ENCODE measurements at regions of chr11 and their contacts with region 1.

Region 1: DNA sequence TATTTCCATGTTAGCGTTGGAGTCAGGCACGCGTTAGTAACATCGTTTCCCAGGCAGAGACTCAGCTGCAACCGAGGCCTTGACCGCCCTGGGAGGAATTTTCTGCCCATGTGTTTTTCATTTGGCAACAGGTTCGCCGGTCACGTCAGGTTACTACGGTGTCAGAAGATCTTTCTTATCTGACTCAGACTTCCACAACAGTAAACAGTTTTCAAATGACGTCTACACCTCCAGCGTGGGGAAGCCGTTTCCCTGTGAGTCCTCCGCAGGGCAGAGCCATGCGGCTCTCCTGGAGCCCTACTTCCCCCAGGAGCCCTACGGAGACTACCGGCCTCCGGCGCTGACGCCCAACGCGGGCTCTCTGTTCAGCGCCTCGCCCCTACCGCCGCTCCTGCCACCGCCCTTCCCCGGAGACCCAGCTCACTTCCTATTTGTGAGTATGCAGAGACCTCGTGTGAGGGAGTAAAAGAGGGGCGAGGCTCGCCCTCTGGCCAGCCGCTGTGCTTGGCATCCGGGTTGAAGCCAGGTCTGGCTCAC is 14.3 kb upstream of the POU2AF3 start:
- DNase-seq: peak; percentile 37
- ATAC-seq: peak; percentile 63
- H3K4me3 ChIP-seq: peak overlapping the region in 1 of 5 experiments; percentile 9
- H3K4me3 Mint-ChIP-seq: peak overlapping the region; percentile 49
- H3K27ac ChIP-seq: no peak overlapping the region
- H3K27ac Mint-ChIP-seq: no peak overlapping the region
- H3K4me1 ChIP-seq: peaks cover 12 to 16% of the 10 kb centered on the region in 2 donors
- H3K4me1 Mint-ChIP-seq: peaks cover 12% of the 10 kb centered on the region
- H3K27me3 ChIP-seq: no peaks in the 10 kb centered on the region
- H3K27me3 Mint-ChIP-seq: no peaks in the 10 kb centered on the region
- CTCF ChIP-seq: no peak

Region 2: DNA sequence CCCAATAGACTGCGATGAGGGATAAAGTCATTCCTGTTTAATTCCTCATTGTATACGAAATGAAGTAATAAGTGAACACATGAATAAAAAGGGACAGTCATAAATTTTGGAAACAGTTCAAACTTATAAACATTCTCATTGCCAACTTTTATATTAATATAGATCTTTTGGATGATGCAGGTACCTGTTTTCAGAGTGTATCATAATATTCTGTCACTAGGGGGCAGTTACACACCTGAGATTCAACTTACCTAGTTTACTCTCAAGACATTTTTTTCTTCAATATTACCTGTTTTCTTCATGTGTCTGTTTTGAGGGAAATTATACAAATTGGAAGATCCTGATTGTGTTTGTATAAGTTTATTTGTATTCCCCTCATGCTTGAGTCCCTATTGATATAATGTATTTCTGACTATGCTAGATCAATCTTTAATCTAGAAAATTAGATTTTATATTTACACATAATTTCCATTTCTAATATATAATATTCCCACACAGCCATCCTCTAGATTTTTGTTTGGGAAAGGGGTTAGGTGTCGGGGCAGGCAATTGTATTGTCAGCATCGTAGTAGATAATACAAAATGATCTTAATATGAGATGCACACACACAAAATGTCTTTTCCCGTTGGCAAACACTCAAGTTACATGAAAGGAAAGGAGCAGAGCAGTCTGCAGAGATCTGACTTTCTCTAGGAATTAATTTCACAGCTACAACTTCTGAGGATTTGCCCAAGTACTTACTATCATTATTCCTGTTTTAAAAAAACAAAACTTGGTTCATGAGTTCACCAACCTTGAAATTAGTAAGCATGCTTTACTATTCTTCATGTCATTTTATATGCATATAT is 835.9 kb before region 1 on chr11:
- CTCF ChIA-PET with region 1: interaction called, 22 read pairs
- POLR2A ChIA-PET with region 1: no interaction called
- intact Hi-C with region 1: loop called (anchors 5 kb)
- DNase-seq: peak; percentile 45
- ATAC-seq: no peak
- H3K4me3 ChIP-seq: no peak overlapping the region
- H3K4me3 Mint-ChIP-seq: no peak overlapping the region
- H3K27ac ChIP-seq: no peak overlapping the region
- H3K27ac Mint-ChIP-seq: no peak overlapping the region
- H3K4me1 ChIP-seq: no peaks in the 10 kb centered on the region
- H3K4me1 Mint-ChIP-seq: peaks cover 13% of the 10 kb centered on the region
- H3K27me3 ChIP-seq: no peaks in the 10 kb centered on the region
- H3K27me3 Mint-ChIP-seq: no peaks in the 10 kb centered on the region
- CTCF ChIP-seq: peak; percentile 77

Region 3: DNA sequence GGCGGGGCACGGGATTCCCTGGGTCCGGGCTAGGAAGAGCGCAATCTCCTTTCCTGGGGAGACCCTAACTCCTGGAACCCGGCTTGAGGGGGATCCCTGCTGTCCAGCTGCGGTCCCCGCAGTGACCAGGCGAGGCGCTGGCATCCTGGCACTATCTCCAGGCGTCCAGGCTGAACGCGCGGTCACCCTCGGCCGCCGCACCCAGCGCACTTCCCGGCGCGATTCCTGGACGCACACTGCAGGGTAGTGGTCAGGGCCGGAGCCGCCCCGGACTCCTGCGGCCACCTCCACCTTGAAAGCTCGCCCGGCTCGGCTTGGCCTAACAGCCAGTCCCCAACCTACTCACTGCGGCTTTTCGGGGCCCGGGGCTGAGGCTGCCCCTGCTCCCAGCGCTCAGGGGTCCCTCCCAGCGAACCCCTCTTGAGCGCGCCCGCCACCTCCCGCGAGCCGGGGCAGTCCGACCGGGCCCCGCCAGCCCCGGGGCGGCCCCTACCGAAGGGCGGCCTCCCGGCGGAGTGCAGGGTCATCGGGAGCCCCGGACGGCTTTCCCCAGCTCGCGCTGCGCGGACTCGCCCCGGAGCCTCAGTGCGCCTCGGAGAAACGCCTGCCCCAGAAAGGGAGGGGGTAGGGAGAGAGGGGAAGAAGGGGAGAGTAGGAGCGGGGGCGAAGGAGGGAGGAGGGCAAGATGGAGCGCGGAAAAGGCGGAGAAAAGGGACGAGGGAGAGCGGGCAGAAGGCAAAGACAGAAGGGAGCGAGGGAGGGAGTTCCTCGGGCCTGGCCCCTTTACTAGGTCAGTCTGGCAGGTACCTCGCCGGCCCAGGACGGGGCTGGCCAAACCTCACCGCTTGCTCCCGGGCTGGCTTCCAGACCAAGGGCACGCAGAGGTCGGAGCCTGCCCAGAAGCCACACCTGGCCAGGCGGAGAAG is 15.4 kb after region 1 on chr11:
- CTCF ChIA-PET with region 1: interaction called, 42 read pairs
- POLR2A ChIA-PET with region 1: no interaction called
- intact Hi-C with region 1: loop called (anchors 2 kb)
- DNase-seq: peak; percentile 46
- ATAC-seq: peak; percentile 59
- H3K4me3 ChIP-seq: peak overlapping the region in 4 of 5 experiments; percentile 57 to 77 (median 66)
- H3K4me3 Mint-ChIP-seq: peak overlapping the region; percentile 76
- H3K27ac ChIP-seq: peak overlapping the region in 1 of 2 donors; percentile 23
- H3K27ac Mint-ChIP-seq: peak overlapping the region; percentile 61
- H3K4me1 ChIP-seq: peaks cover 32 to 45% of the 10 kb centered on the region in 2 donors
- H3K4me1 Mint-ChIP-seq: peaks cover 35% of the 10 kb centered on the region
- H3K27me3 ChIP-seq: peaks cover 0 to 29% (median 9%) of the 10 kb centered on the region in 4 experiments
- H3K27me3 Mint-ChIP-seq: peaks cover 12% of the 10 kb centered on the region
- CTCF ChIP-seq: peak; percentile 37

Region 4: GRCh38 chr11:111399187-111400031 is 115.4 kb after region 1 on chr11:
- CTCF ChIA-PET with region 1: interaction called, 11 read pairs
- POLR2A ChIA-PET with region 1: interaction called, 3 read pairs
- intact Hi-C with region 1: no loop called
- DNase-seq: peak; percentile 52
- ATAC-seq: peak; percentile 55
- H3K4me3 ChIP-seq: peak overlapping the region in 4 of 5 experiments; percentile 0 to 45 (median 34)
- H3K4me3 Mint-ChIP-seq: peak overlapping the region; percentile 88
- H3K27ac ChIP-seq: peak overlapping the region; percentile 72 to 86
- H3K27ac Mint-ChIP-seq: peak overlapping the region; percentile 93
- H3K4me1 ChIP-seq: peaks cover 57 to 58% of the 10 kb centered on the region in 2 donors
- H3K4me1 Mint-ChIP-seq: peaks cover 73% of the 10 kb centered on the region
- H3K27me3 ChIP-seq: no peaks in the 10 kb centered on the region
- H3K27me3 Mint-ChIP-seq: no peaks in the 10 kb centered on the region
- CTCF ChIP-seq: no peak

Region 5: GRCh38 chr11:111435046-111435698 is 151.2 kb after region 1 on chr11:
- CTCF ChIA-PET with region 1: interaction called, 571 read pairs
- POLR2A ChIA-PET with region 1: interaction called, 3 read pairs
- intact Hi-C with region 1: no loop called
- DNase-seq: no peak
- ATAC-seq: no peak
- H3K4me3 ChIP-seq: no peak overlapping the region
- H3K4me3 Mint-ChIP-seq: no peak overlapping the region
- H3K27ac ChIP-seq: no peak overlapping the region
- H3K27ac Mint-ChIP-seq: no peak overlapping the region
- H3K4me1 ChIP-seq: peaks cover 15 to 29% of the 10 kb centered on the region in 2 donors
- H3K4me1 Mint-ChIP-seq: peaks cover 32% of the 10 kb centered on the region
- H3K27me3 ChIP-seq: peaks cover 0 to 4% (median 1%) of the 10 kb centered on the region in 4 experiments
- H3K27me3 Mint-ChIP-seq: no peaks in the 10 kb centered on the region
- CTCF ChIP-seq: no peak

Region 6: DNA sequence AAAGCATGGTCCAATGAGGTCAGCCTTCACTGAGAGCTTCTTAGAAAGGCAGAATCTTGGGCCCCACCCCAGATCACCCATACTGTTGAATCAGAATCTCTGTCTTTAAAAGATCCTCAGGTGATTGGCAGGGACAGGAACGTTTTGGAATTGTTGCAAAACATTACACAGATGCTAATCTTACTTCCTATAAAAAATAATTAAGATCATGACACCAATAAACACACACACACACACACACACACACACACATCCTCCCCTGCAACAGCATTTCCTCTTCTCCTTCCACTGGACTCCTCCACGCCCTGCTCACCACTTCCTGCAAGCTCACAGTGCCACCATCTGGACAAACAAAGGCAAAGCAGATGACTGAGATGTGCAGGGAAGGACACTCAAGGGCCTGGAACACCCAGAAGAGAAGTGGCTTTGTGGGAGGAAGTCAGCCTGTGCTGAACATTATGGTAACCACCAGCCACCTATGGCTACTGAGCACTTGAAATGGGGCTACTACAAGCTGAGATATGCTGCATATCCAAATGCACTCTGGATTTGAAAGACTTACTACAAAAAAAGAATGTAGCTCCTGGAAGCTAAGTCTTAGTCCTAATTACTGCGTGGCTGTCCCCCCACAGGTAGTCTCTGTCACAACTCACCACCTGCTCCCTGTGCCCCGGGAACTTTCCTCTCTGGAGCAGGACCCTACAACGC is 162.5 kb after region 1 on chr11:
- CTCF ChIA-PET with region 1: interaction called, 83 read pairs
- POLR2A ChIA-PET with region 1: interaction called, 3 read pairs
- intact Hi-C with region 1: loop called (anchors 1 kb)
- DNase-seq: peak; percentile 94
- ATAC-seq: peak; percentile 98
- H3K4me3 ChIP-seq: no peak overlapping the region
- H3K4me3 Mint-ChIP-seq: peak overlapping the region; percentile 1
- H3K27ac ChIP-seq: no peak overlapping the region
- H3K27ac Mint-ChIP-seq: peak overlapping the region; percentile 28
- H3K4me1 ChIP-seq: peaks cover 31 to 35% of the 10 kb centered on the region in 2 donors
- H3K4me1 Mint-ChIP-seq: peaks cover 37% of the 10 kb centered on the region
- H3K27me3 ChIP-seq: no peaks in the 10 kb centered on the region
- H3K27me3 Mint-ChIP-seq: peaks cover under 1% of the 10 kb centered on the region
- CTCF ChIP-seq: peak; percentile 74

Measured in B cell (primary cell).